Esophagus squamous epithelium (tissue), 5 donors: ENCODE measurements at regions of chr2 and their contacts with region 1.

Region 1: DNA sequence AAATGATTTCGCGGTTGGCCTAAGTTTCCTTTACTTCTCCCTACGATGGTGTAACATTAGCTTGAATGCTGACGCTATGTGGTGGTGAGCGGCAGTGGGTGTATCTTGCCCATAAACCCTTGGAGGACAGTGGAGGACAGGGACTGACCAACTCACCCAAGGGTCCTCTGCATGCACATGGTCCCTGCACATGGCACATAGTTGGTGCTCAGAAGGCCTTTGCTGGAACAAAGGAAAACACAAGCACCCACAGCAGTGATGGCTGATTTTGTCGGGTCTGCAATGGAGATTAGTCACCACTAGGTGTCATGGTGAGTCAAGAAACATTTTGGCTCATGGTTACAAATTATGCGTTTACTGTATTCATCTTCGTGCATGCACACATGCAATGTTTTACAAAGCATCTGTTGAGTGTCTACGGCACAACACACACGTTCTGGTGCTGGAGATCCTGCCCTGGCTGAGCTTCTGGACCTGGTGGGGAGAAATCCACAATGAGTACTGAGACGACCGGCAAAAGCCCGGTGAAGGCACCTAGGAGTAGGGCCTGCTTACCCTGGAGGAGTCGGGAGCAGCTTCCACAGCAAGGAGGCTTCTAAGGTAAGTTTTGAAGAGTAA is 44.0 kb downstream of the PDCL3 start:
- DNase-seq: no peak
- H3K4me3 ChIP-seq: no peak overlapping the region
- H3K27ac ChIP-seq: no peak overlapping the region
- H3K4me1 ChIP-seq: peaks cover 0 to 5% (median 0%) of the 10 kb centered on the region in 3 donors
- H3K27me3 ChIP-seq: no peaks in the 10 kb centered on the region
- CTCF ChIP-seq: peak; percentile 52 to 80 (median 60)
- POLR2A ChIP-seq: no peak

Region 2: GRCh38 chr2:100352521-100352920 is 254.3 kb before region 1 on chr2:
- intact Hi-C with region 1: no loop called
- DNase-seq: no peak
- H3K4me3 ChIP-seq: no peak overlapping the region
- H3K27ac ChIP-seq: no peak overlapping the region
- H3K4me1 ChIP-seq: peaks cover 0 to 8% (median 0%) of the 10 kb centered on the region in 3 donors
- H3K27me3 ChIP-seq: peaks cover 0 to 46% (median 0%) of the 10 kb centered on the region in 4 donors
- CTCF ChIP-seq: no peak
- POLR2A ChIP-seq: no peak

Region 3: DNA sequence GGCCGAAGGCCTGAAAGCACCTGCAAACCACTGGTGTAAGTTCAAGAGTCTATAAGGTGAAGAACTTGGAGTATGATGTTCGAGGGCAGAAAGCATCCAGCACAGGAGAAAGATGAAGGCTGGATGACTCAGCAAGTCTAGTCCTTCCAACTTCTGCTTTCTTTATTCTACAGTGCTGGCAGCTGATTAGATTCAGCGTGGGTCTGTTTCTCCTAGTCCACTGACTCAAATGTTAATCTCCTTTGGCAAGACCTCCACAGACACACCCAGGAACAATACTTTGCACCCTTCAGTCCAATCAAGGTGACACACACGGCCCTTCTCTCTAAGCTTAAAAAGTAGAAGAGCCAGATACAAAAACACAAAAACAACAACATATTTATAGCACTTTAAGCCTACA is 93.2 kb before region 1 on chr2:
- intact Hi-C with region 1: no loop called
- DNase-seq: no peak
- H3K4me3 ChIP-seq: no peak overlapping the region
- H3K27ac ChIP-seq: no peak overlapping the region
- H3K4me1 ChIP-seq: peaks cover 0 to 3% (median 0%) of the 10 kb centered on the region in 3 donors
- H3K27me3 ChIP-seq: no peaks in the 10 kb centered on the region
- CTCF ChIP-seq: no peak
- POLR2A ChIP-seq: no peak

Region 4: GRCh38 chr2:100992262-100992661 is 385.4 kb after region 1 on chr2:
- intact Hi-C with region 1: loop called (anchors 5 kb)
- DNase-seq: no peak
- H3K4me3 ChIP-seq: no peak overlapping the region
- H3K27ac ChIP-seq: no peak overlapping the region
- H3K4me1 ChIP-seq: no peaks in the 10 kb centered on the region
- H3K27me3 ChIP-seq: no peaks in the 10 kb centered on the region
- CTCF ChIP-seq: no peak
- POLR2A ChIP-seq: no peak